WTC11 (cell line): ENCODE measurements at regions of chr16 and their contacts with region 1.

Region 1: GRCh38 chr16:73546349-73546845 is 498.5 kb upstream of the ZFHX3 start:
- DNase-seq: no peak
- ATAC-seq: peak; percentile 50
- H3K4me3 Mint-ChIP-seq: no peak overlapping the region
- H3K27ac Mint-ChIP-seq: no peak overlapping the region
- H3K4me1 Mint-ChIP-seq: peaks cover 67% of the 10 kb centered on the region
- H3K27me3 Mint-ChIP-seq: no peaks in the 10 kb centered on the region
- CTCF ChIP-seq: no peak

Region 2: GRCh38 chr16:73457851-73458250 is 88.5 kb before region 1 on chr16:
- CTCF ChIA-PET with region 1: no interaction called
- POLR2A ChIA-PET with region 1: interaction called, 12 read pairs
- DNase-seq: no peak
- ATAC-seq: no peak
- H3K4me3 Mint-ChIP-seq: no peak overlapping the region
- H3K27ac Mint-ChIP-seq: no peak overlapping the region
- H3K4me1 Mint-ChIP-seq: peaks cover 39% of the 10 kb centered on the region
- H3K27me3 Mint-ChIP-seq: no peaks in the 10 kb centered on the region
- CTCF ChIP-seq: no peak